ENCODE measurements at regions of chr17 and their contacts with region 1.

Region 1: GRCh38 chr17:40303009-40303657 is 5.8 kb upstream of the RARA start:
- DNase-seq: peak; percentile 50
- H3K4me3 Mint-ChIP-seq: no peak overlapping the region
- H3K27ac Mint-ChIP-seq: no peak overlapping the region
- H3K4me1 Mint-ChIP-seq: peaks cover 15% of the 10 kb centered on the region
- H3K27me3 Mint-ChIP-seq: no peaks in the 10 kb centered on the region

Region 2: GRCh38 chr17:40317880-40318829 is 15.0 kb after region 1 on chr17:
- CTCF ChIA-PET with region 1: interaction called, 62 read pairs
- POLR2A ChIA-PET with region 1: interaction called, 68 read pairs
- DNase-seq: peak; percentile 94
- H3K4me3 Mint-ChIP-seq: peak overlapping the region; percentile 90
- H3K27ac Mint-ChIP-seq: peak overlapping the region; percentile 93
- H3K4me1 Mint-ChIP-seq: peaks cover 76% of the 10 kb centered on the region
- H3K27me3 Mint-ChIP-seq: no peaks in the 10 kb centered on the region

Region 3: GRCh38 chr17:40323391-40324381 is 20.6 kb after region 1 on chr17:
- CTCF ChIA-PET with region 1: interaction called, 62 read pairs
- POLR2A ChIA-PET with region 1: interaction called, 68 read pairs
- DNase-seq: peak; percentile 52
- H3K4me3 Mint-ChIP-seq: peak overlapping the region; percentile 90
- H3K27ac Mint-ChIP-seq: peak overlapping the region; percentile 93
- H3K4me1 Mint-ChIP-seq: peaks cover 88% of the 10 kb centered on the region
- H3K27me3 Mint-ChIP-seq: no peaks in the 10 kb centered on the region

Region 4: DNA sequence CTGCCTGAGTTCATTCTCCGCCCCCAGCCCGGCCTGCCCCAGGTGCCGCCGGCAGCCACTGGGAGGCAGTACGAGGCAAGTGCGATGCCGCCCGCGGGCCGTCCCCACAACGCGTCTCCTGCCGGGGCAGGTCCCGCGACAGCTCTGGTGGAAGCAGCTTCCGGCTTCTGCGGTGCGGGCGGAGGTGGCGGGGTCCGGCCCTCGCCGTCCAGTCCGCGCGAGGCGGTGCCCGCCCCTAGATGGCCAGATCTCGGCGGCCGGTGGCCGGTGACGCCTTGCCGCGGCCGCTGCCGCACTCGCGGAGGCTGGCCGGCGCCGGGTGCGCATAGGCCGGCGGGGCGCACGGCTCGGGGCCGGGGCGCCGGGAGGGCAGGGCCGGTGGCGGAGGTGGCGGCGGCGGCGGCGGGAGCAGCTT is 59.6 kb after region 1 on chr17:
- CTCF ChIA-PET with region 1: interaction called, 13 read pairs
- POLR2A ChIA-PET with region 1: interaction called, 6 read pairs
- DNase-seq: peak; percentile 90
- H3K4me3 Mint-ChIP-seq: peak overlapping the region; percentile 56
- H3K27ac Mint-ChIP-seq: no peak overlapping the region
- H3K4me1 Mint-ChIP-seq: peaks cover 21% of the 10 kb centered on the region
- H3K27me3 Mint-ChIP-seq: peaks cover 21% of the 10 kb centered on the region

Measured in activated CD4-positive, alpha-beta memory T cell treated with anti-CD3 and anti-CD28 coated beads, Interleukin-2, amount 10 ng/mL, durations not matched to agents 7 days and 5 days (primary cell).